ENCODE measurements at regions of chr4 and their contacts with region 1.

Region 1: GRCh38 chr4:75940692-75941253 is at the start of gene NAAA:
- DNase-seq: peak; percentile 85
- H3K4me3 Mint-ChIP-seq: peak within 1 kb of the TSS; percentile 96
- H3K27ac Mint-ChIP-seq: peak within 1 kb of the TSS; percentile 91
- H3K4me1 Mint-ChIP-seq: peaks cover 23% of the 10 kb centered on the region
- H3K27me3 Mint-ChIP-seq: no peaks in the 10 kb centered on the region
- total RNA-seq, gene NAAA: 24.4 to 27.1 TPM

Region 2: DNA sequence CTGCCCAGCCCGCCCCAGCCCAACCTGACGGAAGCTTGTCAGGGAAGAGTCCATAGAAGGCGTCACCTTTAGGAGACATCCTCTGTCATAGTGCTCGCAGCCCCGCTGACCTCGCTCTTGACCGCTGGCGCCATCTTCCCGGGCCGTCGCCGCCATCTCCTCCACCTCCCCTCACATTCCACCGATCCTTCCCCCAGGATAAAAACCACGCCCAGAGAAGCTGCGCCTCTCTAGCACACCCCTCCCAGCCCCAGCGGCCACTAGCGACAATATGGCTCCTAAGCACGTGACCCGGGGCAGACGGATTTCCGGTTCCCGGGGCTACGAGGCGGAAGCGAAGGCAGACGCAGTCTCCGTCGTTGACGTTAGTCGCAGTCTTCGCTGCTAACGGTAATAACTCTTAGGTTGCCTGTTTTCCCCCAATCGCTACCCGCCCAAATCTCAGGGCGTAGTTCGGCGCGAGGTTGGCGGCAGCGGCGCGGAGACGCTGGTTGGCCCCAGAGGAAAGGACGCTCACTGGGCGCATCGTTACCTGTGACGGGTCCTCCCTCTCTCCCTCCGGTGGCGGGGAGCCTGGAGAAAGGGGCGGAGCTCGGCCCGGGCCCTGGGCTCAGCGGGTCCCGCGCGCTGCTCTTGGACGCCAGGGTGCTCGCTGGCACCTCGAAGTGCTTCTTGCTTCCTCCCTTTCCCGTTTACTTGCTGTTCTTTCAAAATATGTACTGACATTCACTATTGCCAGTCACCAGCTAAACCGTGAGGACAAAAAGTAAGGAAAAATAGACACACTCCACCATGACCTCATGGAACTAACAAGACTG is 426.4 kb before region 1 on chr4 and contains the starts of genes RCHY1 and THAP6:
- CTCF ChIA-PET with region 1: no interaction called
- intact Hi-C with region 1: loop called (anchors 1 kb)
- DNase-seq: peak; percentile 94
- H3K4me3 Mint-ChIP-seq: no peak within 1 kb of the TSS
- H3K27ac Mint-ChIP-seq: peak within 1 kb of the TSS; percentile 98
- H3K4me1 Mint-ChIP-seq: peaks cover 39% of the 10 kb centered on the region
- H3K27me3 Mint-ChIP-seq: no peaks in the 10 kb centered on the region
- total RNA-seq, gene RCHY1: 31.3 to 34.6 TPM
- total RNA-seq, gene THAP6: 14.3 to 15.4 TPM

Region 3: GRCh38 chr4:75895744-75896314 is 44.9 kb before region 1 on chr4:
- CTCF ChIA-PET with region 1: interaction called, 19 read pairs
- intact Hi-C with region 1: loop called (anchors 1 kb)
- DNase-seq: peak; percentile 18
- H3K4me3 Mint-ChIP-seq: no peak overlapping the region
- H3K27ac Mint-ChIP-seq: no peak overlapping the region
- H3K4me1 Mint-ChIP-seq: no peaks in the 10 kb centered on the region
- H3K27me3 Mint-ChIP-seq: no peaks in the 10 kb centered on the region

Region 4: GRCh38 chr4:75989846-75990528 is 49.2 kb after region 1 on chr4:
- CTCF ChIA-PET with region 1: interaction called, 7 read pairs
- intact Hi-C with region 1: loop called (anchors 1 kb)
- DNase-seq: no peak
- H3K4me3 Mint-ChIP-seq: peak overlapping the region; percentile 85
- H3K27ac Mint-ChIP-seq: peak overlapping the region; percentile 72
- H3K4me1 Mint-ChIP-seq: peaks cover 27% of the 10 kb centered on the region
- H3K27me3 Mint-ChIP-seq: no peaks in the 10 kb centered on the region

Region 5: DNA sequence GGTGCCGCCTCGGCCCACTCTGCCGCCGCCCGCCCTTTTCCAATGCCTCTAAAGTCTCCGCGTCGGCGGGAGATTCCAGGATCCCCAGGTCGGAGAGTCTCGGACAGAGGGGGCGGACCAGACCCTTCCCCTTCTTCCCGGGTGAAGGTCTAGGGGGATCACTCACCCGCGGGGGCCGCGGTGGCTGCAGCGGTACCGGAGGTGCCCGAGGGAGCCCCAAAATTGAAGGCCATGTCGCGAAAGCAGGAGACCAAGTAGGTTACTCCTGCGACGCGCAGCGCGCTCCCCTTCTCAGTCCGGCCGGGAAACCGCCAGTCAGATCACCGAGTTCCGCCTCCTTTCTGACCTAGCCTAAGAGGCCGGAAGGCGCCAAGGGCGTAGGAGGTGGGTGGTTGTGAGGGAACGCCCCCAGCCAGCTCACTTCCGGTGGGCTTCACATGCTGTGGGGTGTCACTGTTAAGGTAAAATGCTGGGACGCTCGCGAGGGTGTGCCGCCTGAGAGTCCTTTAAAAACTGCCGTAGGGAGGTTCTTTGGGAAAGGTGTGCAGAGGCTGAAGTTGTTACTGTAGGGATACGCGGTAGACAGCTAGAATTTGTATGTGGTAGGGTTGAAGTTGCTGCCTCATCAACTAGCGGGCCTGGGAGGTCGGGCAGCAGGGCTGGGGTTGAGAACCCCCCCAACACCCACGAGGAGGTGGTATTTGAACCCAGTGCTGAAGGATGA is 207.5 kb after region 1 on chr4 and contains the start of gene NUP54:
- CTCF ChIA-PET with region 1: interaction called, 4 read pairs
- intact Hi-C with region 1: loop called (anchors 1 kb)
- DNase-seq: peak; percentile 97
- H3K4me3 Mint-ChIP-seq: peak within 1 kb of the TSS; percentile 100
- H3K27ac Mint-ChIP-seq: peak within 1 kb of the TSS; percentile 97
- H3K4me1 Mint-ChIP-seq: peaks cover 27% of the 10 kb centered on the region
- H3K27me3 Mint-ChIP-seq: no peaks in the 10 kb centered on the region
- total RNA-seq, gene NUP54: 43.9 to 53.4 TPM